ENCODE measurements at regions of chrX and their contacts with region 1.

Region 1: GRCh38 chrX:45758319-45758718 is 557.6 kb upstream of the DIPK2B start:
- DNase-seq: peak in 3 of 5 donors; percentile 7 to 67 (median 47)
- H3K4me3 ChIP-seq: peak overlapping the region; percentile 33
- H3K4me3 Mint-ChIP-seq: peak overlapping the region; percentile 71 to 88 (median 81)
- H3K27ac ChIP-seq: peak overlapping the region; percentile 2
- H3K27ac Mint-ChIP-seq: peak overlapping the region; percentile 79 to 99 (median 93)
- H3K4me1 ChIP-seq: peaks cover 59% of the 10 kb centered on the region
- H3K4me1 Mint-ChIP-seq: peaks cover 59 to 80% (median 78%) of the 10 kb centered on the region in 3 donors
- H3K27me3 ChIP-seq: no peaks in the 10 kb centered on the region
- H3K27me3 Mint-ChIP-seq: peaks cover 0 to 1% of the 10 kb centered on the region in 2 donors

Region 2: DNA sequence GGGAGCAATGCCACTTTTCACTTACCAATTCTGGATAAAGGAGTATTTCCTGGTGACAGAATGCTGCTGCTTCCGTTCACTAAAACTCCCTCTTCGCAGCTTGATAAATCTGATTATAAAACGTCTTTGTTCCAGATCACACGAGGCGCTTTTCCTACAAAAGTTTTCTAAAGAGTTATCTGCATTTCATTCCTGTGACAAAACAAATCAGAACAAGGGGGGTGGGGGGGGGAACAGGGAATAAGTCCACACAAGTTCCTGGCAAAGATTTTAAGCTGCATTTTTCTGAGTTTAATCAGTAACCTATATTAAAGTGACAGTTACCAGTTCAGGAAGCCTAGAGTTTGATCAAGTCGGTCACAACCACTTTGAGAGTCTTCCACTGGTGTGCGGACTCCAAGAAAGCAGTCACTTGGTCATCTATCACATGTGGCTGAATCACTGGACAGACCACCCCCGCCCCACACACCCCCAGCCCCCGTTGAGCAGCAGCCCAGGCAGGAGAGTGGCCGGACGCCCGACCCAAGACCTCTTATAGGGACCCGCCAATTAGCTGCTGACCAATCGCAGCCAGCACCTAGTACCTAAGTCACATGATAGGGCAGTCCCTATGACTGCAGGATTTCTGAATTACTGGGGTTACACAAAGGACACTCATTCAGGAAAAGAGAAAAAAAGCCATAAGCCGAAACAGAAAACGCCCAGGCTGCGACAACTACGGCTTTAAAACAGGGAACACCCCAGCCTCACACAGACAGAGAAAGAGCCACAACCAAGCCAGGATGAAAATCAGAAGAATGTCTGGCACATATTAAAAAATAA is 11.7 kb after region 1 on chrX:
- CTCF ChIA-PET with region 1: interaction called, 8 read pairs
- POLR2A ChIA-PET with region 1: interaction called, 13 read pairs
- DNase-seq: peak in 3 of 5 donors; percentile 4 to 50 (median 31)
- H3K4me3 ChIP-seq: peak overlapping the region; percentile 64
- H3K4me3 Mint-ChIP-seq: peak overlapping the region; percentile 90 to 94 (median 92)
- H3K27ac ChIP-seq: peak overlapping the region; percentile 57
- H3K27ac Mint-ChIP-seq: peak overlapping the region; percentile 51 to 97 (median 92)
- H3K4me1 ChIP-seq: peaks cover 27% of the 10 kb centered on the region
- H3K4me1 Mint-ChIP-seq: peaks cover 37 to 65% (median 64%) of the 10 kb centered on the region in 3 donors
- H3K27me3 ChIP-seq: no peaks in the 10 kb centered on the region
- H3K27me3 Mint-ChIP-seq: peaks cover 0 to 7% of the 10 kb centered on the region in 2 donors

Region 3: GRCh38 chrX:45795546-45795945 is 37.2 kb after region 1 on chrX:
- CTCF ChIA-PET with region 1: no interaction called
- POLR2A ChIA-PET with region 1: no interaction called
- DNase-seq: no peak
- H3K4me3 ChIP-seq: no peak overlapping the region
- H3K4me3 Mint-ChIP-seq: no peak overlapping the region
- H3K27ac ChIP-seq: no peak overlapping the region
- H3K27ac Mint-ChIP-seq: peak overlapping the region in 1 of 8 donors; percentile 5
- H3K4me1 ChIP-seq: no peaks in the 10 kb centered on the region
- H3K4me1 Mint-ChIP-seq: peaks cover 5 to 66% (median 41%) of the 10 kb centered on the region in 3 donors
- H3K27me3 ChIP-seq: no peaks in the 10 kb centered on the region
- H3K27me3 Mint-ChIP-seq: peaks cover 0 to 2% of the 10 kb centered on the region in 2 donors